Natural killer cell (primary cell): ENCODE measurements at regions of chr11 and their contacts with region 1.

Region 1: DNA sequence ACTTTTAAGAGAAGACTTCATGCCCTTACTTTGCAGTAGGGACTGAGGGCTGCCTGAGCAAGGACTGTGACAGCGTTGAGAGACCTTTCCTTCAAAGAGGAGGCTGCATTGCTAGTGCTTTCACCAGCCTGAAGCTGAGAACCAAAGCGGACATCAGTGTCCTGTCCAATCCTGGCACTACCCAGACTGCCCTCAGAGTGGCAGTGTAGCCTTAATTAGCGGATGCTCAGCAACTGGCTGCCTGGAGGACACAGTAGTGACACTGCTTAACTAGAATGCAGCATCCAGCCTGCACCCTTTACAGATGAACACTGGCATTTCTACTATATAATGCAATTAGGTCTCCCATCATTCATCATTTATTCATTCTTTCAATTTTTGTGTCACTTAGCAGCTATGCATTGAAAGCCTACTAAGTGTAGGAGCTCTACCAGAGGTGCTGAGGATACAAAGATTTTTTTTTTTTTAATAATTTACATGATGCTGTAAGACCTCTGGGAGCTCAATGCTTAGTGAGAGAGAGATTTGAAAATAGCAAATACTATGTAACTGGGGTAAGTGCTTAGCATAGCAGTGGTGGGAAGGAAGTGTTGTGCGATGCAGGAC is 36.9 kb upstream of the SLC36A4 start:
- DNase-seq: peak; percentile 47 to 79
- ATAC-seq: peak; percentile 92 to 99 (median 99)
- H3K4me3 ChIP-seq: no peak overlapping the region
- H3K4me3 Mint-ChIP-seq: no peak overlapping the region
- H3K27ac ChIP-seq: no peak overlapping the region
- H3K27ac Mint-ChIP-seq: no peak overlapping the region
- H3K4me1 ChIP-seq: no peaks in the 10 kb centered on the region
- H3K4me1 Mint-ChIP-seq: no peaks in the 10 kb centered on the region
- H3K27me3 ChIP-seq: no peaks in the 10 kb centered on the region
- H3K27me3 Mint-ChIP-seq: peaks cover 6 to 33% of the 10 kb centered on the region in 2 donors
- CTCF ChIP-seq: peak; percentile 73

Region 2: GRCh38 chr11:93543292-93543977 is 308.7 kb after region 1 on chr11 and contains the start of gene SMCO4:
- intact Hi-C with region 1: loop called (anchors 1 kb)
- DNase-seq: peak; percentile 56 to 82
- ATAC-seq: peak; percentile 71 to 80 (median 73)
- H3K4me3 ChIP-seq: peak within 1 kb of the TSS; percentile 66
- H3K4me3 Mint-ChIP-seq: peak within 1 kb of the TSS; percentile 95
- H3K27ac ChIP-seq: peak within 1 kb of the TSS; percentile 60
- H3K27ac Mint-ChIP-seq: peak within 1 kb of the TSS; percentile 53 to 85
- H3K4me1 ChIP-seq: peaks cover 16% of the 10 kb centered on the region
- H3K4me1 Mint-ChIP-seq: peaks cover 18% of the 10 kb centered on the region in 2 donors
- H3K27me3 ChIP-seq: no peaks in the 10 kb centered on the region
- H3K27me3 Mint-ChIP-seq: peaks cover 3 to 9% of the 10 kb centered on the region in 2 donors
- CTCF ChIP-seq: peak; percentile 36
- total RNA-seq, gene SMCO4: 2.7 to 4.6 (median 3.6) TPM

Region 3: GRCh38 chr11:93652161-93652597 is 417.5 kb after region 1 on chr11:
- intact Hi-C with region 1: loop called (anchors 1 kb)
- DNase-seq: peak in 1 of 2 donors; percentile 64
- ATAC-seq: no peak
- H3K4me3 ChIP-seq: no peak overlapping the region
- H3K4me3 Mint-ChIP-seq: no peak overlapping the region
- H3K27ac ChIP-seq: no peak overlapping the region
- H3K27ac Mint-ChIP-seq: no peak overlapping the region
- H3K4me1 ChIP-seq: no peaks in the 10 kb centered on the region
- H3K4me1 Mint-ChIP-seq: no peaks in the 10 kb centered on the region
- H3K27me3 ChIP-seq: peaks cover 2% of the 10 kb centered on the region
- H3K27me3 Mint-ChIP-seq: peaks cover 12 to 22% of the 10 kb centered on the region in 2 donors
- CTCF ChIP-seq: peak; percentile 81